CD4-positive, alpha-beta memory T cell (primary cell): ENCODE measurements at regions of chr4 and their contacts with region 1.

Region 1: DNA sequence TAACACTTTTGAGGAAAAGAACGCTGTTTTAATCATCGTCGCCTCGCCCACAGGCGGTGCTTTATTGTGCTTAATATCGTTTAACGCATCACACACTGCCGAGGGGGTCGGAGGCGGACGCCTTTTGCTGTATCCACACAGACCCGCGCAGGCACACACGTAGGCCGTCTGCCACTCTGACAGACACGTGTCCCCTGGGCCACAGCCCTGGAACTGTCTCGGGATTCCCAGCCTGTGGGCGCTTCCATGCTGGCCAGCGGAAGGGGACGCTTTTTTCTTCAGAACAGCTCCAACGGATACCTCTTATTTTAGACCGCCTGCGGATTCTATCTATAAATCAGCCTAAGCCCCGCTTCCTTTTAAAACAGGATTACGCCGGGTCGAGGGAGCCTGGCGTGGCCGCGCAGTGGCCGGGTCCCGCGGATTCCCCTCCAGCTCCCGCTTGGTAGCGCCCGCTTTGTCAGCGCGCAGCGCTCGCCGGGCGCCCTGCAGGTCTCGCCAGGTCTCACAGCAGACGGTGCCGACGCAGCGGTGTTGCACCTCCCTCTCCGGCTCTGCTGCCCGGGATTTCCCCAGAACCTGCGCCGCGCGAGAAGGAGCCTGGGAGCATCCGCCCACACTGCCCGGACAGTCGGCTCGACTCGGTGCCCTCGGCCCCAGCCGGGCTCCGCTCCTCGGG is at the start of gene NOCT:
- DNase-seq: peak; percentile 90 to 96 (median 93)
- H3K4me3 ChIP-seq: peak within 1 kb of the TSS; percentile 20 to 66
- H3K4me3 Mint-ChIP-seq: peak within 1 kb of the TSS; percentile 87 to 94 (median 90)
- H3K27ac ChIP-seq: peak within 1 kb of the TSS; percentile 84
- H3K27ac Mint-ChIP-seq: peak within 1 kb of the TSS; percentile 93 to 100 (median 99)
- H3K4me1 ChIP-seq: peaks cover 18% of the 10 kb centered on the region
- H3K4me1 Mint-ChIP-seq: peaks cover 13 to 44% (median 17%) of the 10 kb centered on the region in 4 donors
- H3K27me3 ChIP-seq: no peaks in the 10 kb centered on the region
- H3K27me3 Mint-ChIP-seq: no peaks in the 10 kb centered on the region
- total RNA-seq, gene NOCT: 1.4 to 1.7 TPM

Region 2: DNA sequence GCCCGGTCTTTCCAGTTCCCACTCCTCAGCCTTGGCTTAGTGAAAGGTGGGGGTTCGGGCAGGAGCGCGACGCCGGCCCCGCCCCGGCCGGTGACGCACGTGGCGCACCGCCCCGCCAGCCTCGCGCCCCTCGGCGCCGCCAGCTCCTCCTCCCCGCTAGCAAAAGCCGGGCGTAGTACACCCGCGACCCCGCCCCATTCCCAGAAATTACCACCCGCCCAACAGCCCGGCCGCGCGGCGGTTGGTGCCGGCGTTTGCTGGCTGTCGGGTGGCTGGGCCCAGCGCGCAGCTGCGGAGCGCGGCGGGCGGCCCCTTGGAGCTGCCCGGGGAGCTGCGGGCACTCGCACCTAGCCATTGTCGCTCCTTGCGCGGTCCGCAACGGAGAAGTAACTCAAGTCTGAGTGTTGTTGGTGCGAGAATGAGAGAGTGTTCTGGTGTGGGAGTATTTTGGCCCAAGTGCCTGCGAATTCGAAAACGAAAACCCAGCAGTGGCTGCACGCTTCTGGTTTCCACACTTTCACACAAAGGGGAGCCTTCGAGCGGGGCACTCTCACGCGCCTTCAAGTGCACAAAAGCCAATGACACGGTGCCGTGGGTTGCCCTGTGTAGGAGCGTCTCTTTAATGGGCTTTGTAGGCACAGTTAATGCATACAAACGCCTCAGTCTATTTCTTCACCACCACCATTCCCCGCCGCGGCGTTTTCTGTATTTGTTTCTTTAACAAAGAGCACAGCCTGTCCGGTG is 162.6 kb after region 1 on chr4:
- CTCF ChIA-PET with region 1: no interaction called
- POLR2A ChIA-PET with region 1: interaction called, 9 read pairs
- intact Hi-C with region 1: loop called (anchors 1 kb)
- DNase-seq: peak; percentile 92 to 94 (median 92)
- H3K4me3 ChIP-seq: peak overlapping the region; percentile 88 to 89
- H3K4me3 Mint-ChIP-seq: peak overlapping the region; percentile 89 to 94 (median 92)
- H3K27ac ChIP-seq: peak overlapping the region; percentile 96
- H3K27ac Mint-ChIP-seq: peak overlapping the region; percentile 92 to 97 (median 96)
- H3K4me1 ChIP-seq: peaks cover 17% of the 10 kb centered on the region
- H3K4me1 Mint-ChIP-seq: peaks cover 14 to 29% (median 18%) of the 10 kb centered on the region in 4 donors
- H3K27me3 ChIP-seq: no peaks in the 10 kb centered on the region
- H3K27me3 Mint-ChIP-seq: no peaks in the 10 kb centered on the region